K562 (cell line): ENCODE measurements at regions of chr16 and their contacts with region 1.

Region 1: GRCh38 chr16:13940397-13940933 is 20.5 kb downstream of the ERCC4 start:
- DNase-seq: no peak
- ATAC-seq: no peak
- H3K4me3 ChIP-seq: no peak overlapping the region
- H3K27ac ChIP-seq: no peak overlapping the region
- H3K4me1 ChIP-seq: no peaks in the 10 kb centered on the region
- H3K27me3 ChIP-seq: no peaks in the 10 kb centered on the region
- CTCF ChIP-seq: no peak
- EP300 ChIP-seq: no peak
- POLR2A ChIP-seq: no peak
- RAD21 ChIP-seq: no peak

Region 2: GRCh38 chr16:13957197-13958078 is 17.0 kb after region 1 on chr16:
- CTCF ChIA-PET with region 1: no interaction called
- POLR2A ChIA-PET with region 1: no interaction called
- in situ Hi-C with region 1: no loop called
- intact Hi-C with region 1: no loop called
- DNase-seq: peak; percentile 32 to 81 (median 51)
- ATAC-seq: peak; percentile 94
- H3K4me3 ChIP-seq: no peak overlapping the region
- H3K27ac ChIP-seq: peak overlapping the region; percentile 56; the same call in 2 of the 3 replicates
- H3K4me1 ChIP-seq: peaks cover 0 to 16% of the 10 kb centered on the region in 2 experiments; a peak in 3 of 5 replicates
- H3K27me3 ChIP-seq: peaks cover 10 to 13% of the 10 kb centered on the region in 2 experiments
- CTCF ChIP-seq: no peak
- EP300 ChIP-seq: peak; percentile 54; the same call in 1 of the 2 replicates
- POLR2A ChIP-seq: no peak
- RAD21 ChIP-seq: no peak

Region 3: DNA sequence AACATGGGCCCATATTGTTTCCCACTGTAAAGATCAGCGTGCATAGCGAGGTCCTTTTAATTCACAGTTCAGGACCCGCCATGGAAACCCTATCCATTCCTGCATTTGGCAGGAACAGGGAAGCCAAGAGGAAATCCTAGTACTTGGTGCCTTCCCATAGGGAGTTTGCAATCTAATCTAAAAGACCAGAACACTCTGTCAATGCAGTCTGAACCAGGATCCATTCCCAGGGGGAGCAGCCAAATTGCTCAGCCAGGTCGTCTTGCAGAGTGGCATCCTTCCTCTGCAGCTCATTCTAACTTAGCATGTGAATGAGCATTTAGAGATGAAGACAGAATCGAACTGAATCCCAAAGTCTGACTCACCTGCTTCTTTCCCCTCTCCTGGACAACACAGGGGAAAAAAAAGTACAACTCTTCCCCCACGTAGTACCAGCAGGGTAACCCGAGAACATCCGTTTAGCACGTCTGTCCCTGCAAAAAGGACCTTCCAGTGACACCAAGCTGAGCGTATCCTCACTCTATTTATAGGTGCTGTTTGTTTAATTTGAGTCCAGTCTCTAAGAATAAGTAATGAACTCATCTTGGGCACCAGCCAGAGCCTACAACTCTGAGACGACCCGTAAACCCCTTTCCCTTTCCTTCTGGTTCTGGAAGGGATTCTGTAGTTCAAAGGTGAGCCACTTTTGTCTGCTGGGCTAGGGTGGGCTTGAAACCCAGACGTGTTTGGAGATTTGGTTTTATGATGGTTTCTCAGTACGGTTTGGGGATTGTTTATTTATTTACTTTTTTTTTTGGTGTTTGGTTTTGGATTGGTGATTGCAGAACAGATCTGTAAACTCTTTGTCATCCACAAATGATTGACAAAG is 54.0 kb after region 1 on chr16:
- CTCF ChIA-PET with region 1: no interaction called
- POLR2A ChIA-PET with region 1: no interaction called
- in situ Hi-C with region 1: no loop called
- intact Hi-C with region 1: no loop called
- DNase-seq: no peak
- ATAC-seq: no peak
- H3K4me3 ChIP-seq: no peak overlapping the region
- H3K27ac ChIP-seq: no peak overlapping the region
- H3K4me1 ChIP-seq: peaks cover 1 to 10% of the 10 kb centered on the region in 2 experiments; a peak in 3 of 5 replicates
- H3K27me3 ChIP-seq: peaks cover 6 to 21% of the 10 kb centered on the region in 2 experiments; a peak in 3 of 5 replicates
- CTCF ChIP-seq: no peak
- EP300 ChIP-seq: no peak
- POLR2A ChIP-seq: no peak
- RAD21 ChIP-seq: no peak

Region 4: DNA sequence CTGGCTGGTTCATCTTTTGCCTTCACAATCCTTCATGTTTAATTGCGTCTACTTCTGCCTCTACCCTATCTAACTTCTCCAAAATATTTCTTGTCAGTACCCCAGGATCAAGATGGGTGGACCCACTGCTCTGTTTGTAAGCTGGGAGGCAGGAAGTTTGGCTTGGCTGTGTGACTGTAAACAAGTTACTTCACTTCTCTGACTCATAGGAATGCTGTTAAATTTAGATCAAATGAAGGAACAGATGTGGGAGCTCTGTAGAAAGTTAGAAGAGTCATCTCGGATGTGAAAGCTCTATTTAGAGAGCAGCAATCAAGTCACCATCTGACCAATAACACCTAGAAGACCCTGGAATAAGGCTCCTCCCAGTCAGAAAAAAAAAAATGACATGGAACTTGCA is 75.5 kb after region 1 on chr16:
- CTCF ChIA-PET with region 1: no interaction called
- POLR2A ChIA-PET with region 1: no interaction called
- in situ Hi-C with region 1: loop called (anchors 5 kb)
- intact Hi-C with region 1: no loop called
- DNase-seq: no peak
- ATAC-seq: no peak
- H3K4me3 ChIP-seq: no peak overlapping the region
- H3K27ac ChIP-seq: no peak overlapping the region
- H3K4me1 ChIP-seq: no peaks in the 10 kb centered on the region
- H3K27me3 ChIP-seq: peaks cover 21 to 24% of the 10 kb centered on the region in 2 experiments
- CTCF ChIP-seq: no peak
- EP300 ChIP-seq: no peak
- POLR2A ChIP-seq: no peak
- RAD21 ChIP-seq: no peak